HepG2 (cell line): ENCODE measurements at regions of chr16 and their contacts with region 1.

Region 1: GRCh38 chr16:67326472-67327309 is at the starts of genes KCTD19 and LRRC36:
- DNase-seq: peak; percentile 70
- ATAC-seq: peak; percentile 99
- H3K4me3 ChIP-seq: peak within 1 kb of the TSS; percentile 53 to 73 (median 59)
- H3K27ac ChIP-seq: no peak within 1 kb of the TSS
- H3K4me1 ChIP-seq: peaks cover 23% of the 10 kb centered on the region
- H3K27me3 ChIP-seq: peaks cover 0 to 3% of the 10 kb centered on the region in 2 experiments; a peak in 4 of 5 replicates
- CTCF ChIP-seq: peak; percentile 91
- EP300 ChIP-seq: no peak
- POLR2A ChIP-seq: no peak
- RAD21 ChIP-seq: peak; percentile 78
- total RNA-seq, gene KCTD19: not detected in 2 replicates
- total RNA-seq, gene LRRC36: 0.13 and 0.15 TPM in 2 replicates

Region 2: GRCh38 chr16:67393035-67393787 is 66.5 kb after region 1 on chr16 and contains the start of gene TPPP3:
- CTCF ChIA-PET with region 1: interaction called, 13 read pairs
- POLR2A ChIA-PET with region 1: no interaction called
- in situ Hi-C with region 1: no loop called
- intact Hi-C with region 1: loop called (anchors 2 kb)
- DNase-seq: peak; percentile 77
- ATAC-seq: peak; percentile 74
- H3K4me3 ChIP-seq: peak within 1 kb of the TSS; percentile 9 to 73 (median 31); a peak in 4 of 6 replicates
- H3K27ac ChIP-seq: no peak within 1 kb of the TSS
- H3K4me1 ChIP-seq: peaks cover 44% of the 10 kb centered on the region
- H3K27me3 ChIP-seq: peaks cover 6 to 65% of the 10 kb centered on the region in 2 experiments; a peak in 4 of 5 replicates
- CTCF ChIP-seq: peak; percentile 79
- EP300 ChIP-seq: peak in 1 of 2 experiments; percentile 42; a peak in 1 of 4 replicates
- POLR2A ChIP-seq: peak in 1 of 2 experiments; percentile 24; a peak in 1 of 4 replicates
- RAD21 ChIP-seq: peak; percentile 80
- total RNA-seq, gene TPPP3: 0.20 and 0.44 TPM in 2 replicates

Region 3: DNA sequence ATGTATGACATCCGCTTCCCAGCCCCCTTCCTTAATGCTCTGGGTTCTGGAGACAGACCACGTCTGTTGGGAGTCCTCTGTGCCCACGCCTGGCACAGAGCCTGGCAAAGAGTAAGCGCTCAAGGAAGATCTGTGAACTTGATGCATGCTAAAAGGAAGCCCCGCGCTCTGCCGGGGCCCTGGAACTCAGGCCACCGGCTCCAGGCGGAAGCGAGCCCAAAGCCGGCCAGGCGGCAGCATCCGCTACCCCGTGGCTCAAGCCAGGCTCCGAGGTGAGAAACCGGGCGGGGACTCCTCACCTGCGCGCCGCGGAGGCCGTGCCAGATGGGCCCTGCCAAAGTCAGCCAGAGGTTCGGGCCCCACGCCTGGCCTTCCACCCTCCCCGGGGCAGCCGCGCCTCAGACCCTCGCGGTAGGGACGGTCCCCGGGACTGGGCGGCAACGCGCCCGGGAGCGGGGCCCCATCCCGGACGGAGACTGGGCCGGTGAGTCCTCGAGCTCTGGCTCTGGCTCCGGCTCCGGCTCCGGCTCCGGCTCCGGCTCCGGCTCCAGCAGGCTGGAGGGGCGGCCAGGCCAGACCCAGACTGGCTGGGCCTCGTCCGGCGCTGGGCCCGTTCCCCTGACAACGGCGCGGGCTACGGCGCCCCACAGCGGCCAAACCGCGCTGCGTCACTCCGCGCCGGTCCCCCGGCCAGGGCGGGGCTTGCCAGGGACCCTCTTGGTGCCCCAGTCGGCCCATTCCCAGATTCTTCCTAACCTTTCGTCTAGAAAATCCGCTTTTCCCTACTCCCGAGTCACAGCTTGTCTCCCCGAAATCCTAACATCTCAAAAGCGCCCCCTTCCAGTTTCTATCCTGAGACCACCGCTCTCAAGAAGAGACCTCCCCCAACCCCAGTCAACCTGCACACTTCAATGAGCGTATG is 89.4 kb after region 1 on chr16 and contains the start of gene ZDHHC1:
- CTCF ChIA-PET with region 1: no interaction called
- POLR2A ChIA-PET with region 1: no interaction called
- in situ Hi-C with region 1: no loop called
- intact Hi-C with region 1: loop called (anchors 2 kb)
- DNase-seq: no peak
- ATAC-seq: peak; percentile 90
- H3K4me3 ChIP-seq: peak within 1 kb of the TSS; percentile 54 to 78 (median 76)
- H3K27ac ChIP-seq: no peak within 1 kb of the TSS
- H3K4me1 ChIP-seq: peaks cover 40% of the 10 kb centered on the region
- H3K27me3 ChIP-seq: peaks cover 0 to 15% of the 10 kb centered on the region in 2 experiments; a peak in 2 of 5 replicates
- CTCF ChIP-seq: peak; percentile 89
- EP300 ChIP-seq: no peak
- POLR2A ChIP-seq: no peak
- RAD21 ChIP-seq: peak; percentile 83
- total RNA-seq, gene ZDHHC1: 0.36 and 1.1 TPM in 2 replicates

Region 4: DNA sequence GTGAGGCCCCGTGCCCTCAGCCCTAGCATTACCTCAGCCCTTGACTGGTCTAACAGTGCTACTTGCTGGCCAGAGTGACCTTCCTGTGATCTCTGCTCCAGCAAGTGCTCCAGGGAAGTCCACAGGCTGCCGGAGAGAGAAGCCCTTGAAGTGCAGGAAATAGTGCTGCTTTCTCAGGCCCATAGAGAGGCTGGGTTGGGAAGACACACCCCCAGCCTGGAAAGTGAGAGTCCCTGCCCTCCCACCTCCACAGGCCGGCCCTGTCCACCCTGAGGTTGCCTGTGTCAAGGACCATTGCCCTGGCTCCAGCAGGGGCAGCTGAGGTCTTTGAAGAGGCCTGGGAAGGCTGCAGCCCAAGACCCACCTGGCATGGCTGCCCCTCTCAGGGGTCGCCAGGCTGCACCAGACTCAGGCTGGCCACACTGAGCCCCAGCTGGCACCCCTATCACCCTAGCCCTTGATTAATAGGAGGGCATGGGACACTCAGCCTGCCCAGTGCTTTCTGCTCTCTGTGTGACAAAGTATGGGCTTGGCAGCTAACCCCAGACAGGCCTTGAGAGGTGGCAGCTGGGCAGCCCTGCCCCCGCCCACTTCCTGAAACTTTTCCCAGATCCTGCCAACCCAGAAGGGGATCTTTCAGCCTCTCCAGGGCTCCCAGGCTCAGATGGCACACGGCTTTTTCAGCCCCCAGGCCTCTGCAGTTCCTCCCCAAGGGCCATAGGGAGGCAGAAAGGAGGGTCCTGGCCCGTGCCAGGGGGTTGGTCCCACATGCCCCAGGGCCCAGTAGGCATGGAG is 132.6 kb after region 1 on chr16:
- CTCF ChIA-PET with region 1: no interaction called
- POLR2A ChIA-PET with region 1: no interaction called
- in situ Hi-C with region 1: no loop called
- intact Hi-C with region 1: no loop called
- DNase-seq: peak; percentile 70
- ATAC-seq: peak; percentile 83
- H3K4me3 ChIP-seq: peak overlapping the region in 1 of 3 experiments; percentile 18; a peak in 1 of 6 replicates
- H3K27ac ChIP-seq: peak overlapping the region; percentile 56
- H3K4me1 ChIP-seq: peaks cover 22% of the 10 kb centered on the region
- H3K27me3 ChIP-seq: no peaks in the 10 kb centered on the region
- CTCF ChIP-seq: peak; percentile 58
- EP300 ChIP-seq: no peak
- POLR2A ChIP-seq: no peak
- RAD21 ChIP-seq: no peak

Region 5: DNA sequence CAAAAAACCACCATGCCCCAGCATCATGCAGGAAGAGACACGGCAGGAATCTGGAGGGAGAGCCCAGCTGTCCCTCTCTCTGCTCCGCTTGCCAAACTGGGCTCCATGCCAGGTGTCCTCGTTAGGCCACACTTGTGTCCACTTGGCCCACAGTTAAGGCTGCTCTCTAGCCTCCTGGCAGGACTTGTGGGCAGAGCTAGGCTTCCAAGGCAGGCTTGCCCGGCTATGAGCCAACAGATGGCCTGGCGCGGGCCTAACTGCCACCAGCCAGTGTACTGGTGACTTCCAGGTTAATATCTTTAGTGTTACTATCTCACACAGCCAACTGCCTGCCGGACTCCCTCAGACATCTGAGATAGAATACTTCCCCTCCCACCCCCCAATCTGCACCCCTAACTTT is 143.7 kb after region 1 on chr16:
- CTCF ChIA-PET with region 1: interaction called, 10 read pairs
- POLR2A ChIA-PET with region 1: no interaction called
- in situ Hi-C with region 1: no loop called
- intact Hi-C with region 1: no loop called
- DNase-seq: no peak
- ATAC-seq: no peak
- H3K4me3 ChIP-seq: no peak overlapping the region
- H3K27ac ChIP-seq: no peak overlapping the region
- H3K4me1 ChIP-seq: peaks cover 4% of the 10 kb centered on the region
- H3K27me3 ChIP-seq: no peaks in the 10 kb centered on the region
- CTCF ChIP-seq: no peak
- EP300 ChIP-seq: no peak
- POLR2A ChIP-seq: no peak
- RAD21 ChIP-seq: no peak